K562 (cell line): ENCODE measurements at regions of chr7 and their contacts with region 1.

Region 1: DNA sequence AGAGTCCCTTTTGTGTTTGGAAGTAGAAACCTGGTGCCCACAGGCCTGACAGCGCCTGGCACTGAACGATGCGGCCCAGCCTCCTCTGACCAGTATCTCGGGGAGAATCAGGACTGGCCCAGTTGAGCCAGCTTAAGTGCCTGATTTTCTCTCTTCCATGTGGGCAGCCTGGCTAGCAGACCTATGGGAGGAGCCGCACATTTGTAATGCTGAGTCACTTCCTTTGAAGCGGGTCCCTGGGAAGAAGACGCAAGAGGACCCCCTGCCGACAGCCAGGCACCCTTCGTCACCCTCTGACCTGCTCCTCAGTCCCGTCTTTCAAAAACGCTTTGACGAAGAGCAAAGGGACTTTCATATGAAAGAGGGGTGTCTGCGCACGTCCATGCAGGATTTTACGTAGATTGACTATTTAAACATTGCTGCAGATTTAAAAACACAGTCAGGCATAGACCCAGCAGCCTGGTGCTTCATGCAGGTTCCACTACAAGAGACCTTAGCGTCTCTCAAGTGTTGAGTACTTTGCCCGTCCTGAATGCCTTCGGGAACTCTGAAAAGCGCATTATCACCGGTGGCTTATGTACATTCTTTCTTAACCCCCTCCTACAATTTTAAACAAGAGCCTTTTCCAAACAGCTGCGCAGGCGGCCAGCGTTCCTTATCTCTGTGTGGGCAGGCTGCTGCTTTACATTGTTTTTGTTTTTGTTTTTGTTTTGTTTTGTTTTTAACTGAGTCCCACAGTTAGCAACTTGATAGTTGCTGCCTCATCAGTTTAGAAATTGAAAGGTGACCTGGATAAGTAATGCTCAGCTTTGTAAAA is 36.5 kb upstream of the AP5Z1 start:
- DNase-seq: peak; percentile 90 to 92 (median 92)
- ATAC-seq: peak; percentile 90
- H3K4me3 ChIP-seq: peak overlapping the region; percentile 26
- H3K27ac ChIP-seq: peak overlapping the region; percentile 94
- H3K4me1 ChIP-seq: peaks cover 20 to 35% of the 10 kb centered on the region in 2 experiments
- H3K27me3 ChIP-seq: no peaks in the 10 kb centered on the region
- CTCF ChIP-seq: peak; percentile 15 to 32 (median 17); a peak in 3 of 6 replicates
- EP300 ChIP-seq: peak; percentile 47; the same call in 1 of the 2 replicates
- POLR2A ChIP-seq: peak; percentile 54
- RAD21 ChIP-seq: peak in 1 of 2 experiments; percentile 37; a peak in 2 of 4 replicates

Region 2: GRCh38 chr7:4681886-4682620 is 56.9 kb before region 1 on chr7 and contains the start of gene FOXK1:
- CTCF ChIA-PET with region 1: no interaction called
- POLR2A ChIA-PET with region 1: interaction called, 4 read pairs
- in situ Hi-C with region 1: no loop called
- intact Hi-C with region 1: loop called (anchors 5 kb)
- DNase-seq: peak; percentile 83 to 90 (median 88)
- ATAC-seq: peak; percentile 72
- H3K4me3 ChIP-seq: peak within 1 kb of the TSS; percentile 65
- H3K27ac ChIP-seq: peak within 1 kb of the TSS; percentile 78
- H3K4me1 ChIP-seq: peaks cover 14 to 38% of the 10 kb centered on the region in 2 experiments; a peak in 4 of 5 replicates
- H3K27me3 ChIP-seq: peaks cover 0 to 10% of the 10 kb centered on the region in 2 experiments; a peak in 1 of 5 replicates
- CTCF ChIP-seq: 0 out of 6 replicates have a peak, but pooled peaks of 1 of the 3 experiments have one; percentile 7
- EP300 ChIP-seq: no peak
- POLR2A ChIP-seq: no peak
- RAD21 ChIP-seq: no peak
- polyA plus RNA-seq, gene FOXK1: 0.32 to 0.34 TPM

Region 3: DNA sequence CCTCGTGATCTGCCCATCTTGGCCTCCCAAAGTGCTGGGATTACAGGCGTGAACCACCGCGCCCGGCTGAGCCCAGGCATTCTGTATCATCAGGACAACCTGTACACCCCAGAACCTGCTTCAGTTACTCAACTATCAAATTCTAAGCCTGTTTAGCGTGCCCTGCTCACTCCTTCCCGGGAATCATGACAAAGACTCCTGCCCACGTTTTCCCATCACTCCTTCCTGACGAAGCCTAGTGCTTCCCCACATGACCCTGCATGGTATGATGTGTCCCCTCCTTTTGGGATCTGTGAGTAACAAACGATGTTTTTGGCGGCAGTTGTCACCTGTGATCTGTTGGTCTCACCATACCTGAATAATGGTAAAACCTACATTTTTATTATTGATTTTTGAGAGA is 156.8 kb after region 1 on chr7:
- CTCF ChIA-PET with region 1: no interaction called
- POLR2A ChIA-PET with region 1: no interaction called
- in situ Hi-C with region 1: no loop called
- intact Hi-C with region 1: no loop called
- DNase-seq: no peak
- ATAC-seq: no peak
- H3K4me3 ChIP-seq: no peak overlapping the region
- H3K27ac ChIP-seq: no peak overlapping the region
- H3K4me1 ChIP-seq: no peaks in the 10 kb centered on the region; a peak in 1 of 5 replicates
- H3K27me3 ChIP-seq: peaks cover 13 to 44% of the 10 kb centered on the region in 2 experiments
- CTCF ChIP-seq: no peak
- EP300 ChIP-seq: no peak
- POLR2A ChIP-seq: no peak
- RAD21 ChIP-seq: no peak